ENCODE measurements at regions of chr17 and their contacts with region 1.

Region 1: GRCh38 chr17:81484195-81484979 is 28.2 kb downstream of the ACTG1 start:
- DNase-seq: peak; percentile 83 to 89 (median 89)
- H3K4me3 ChIP-seq: peak overlapping the region in 5 of 7 experiments; percentile 34 to 64 (median 59)
- H3K27ac ChIP-seq: no peak overlapping the region
- H3K4me1 ChIP-seq: peaks cover 4 to 92% (median 73%) of the 10 kb centered on the region in 4 experiments
- H3K27me3 ChIP-seq: no peaks in the 10 kb centered on the region

Region 2: DNA sequence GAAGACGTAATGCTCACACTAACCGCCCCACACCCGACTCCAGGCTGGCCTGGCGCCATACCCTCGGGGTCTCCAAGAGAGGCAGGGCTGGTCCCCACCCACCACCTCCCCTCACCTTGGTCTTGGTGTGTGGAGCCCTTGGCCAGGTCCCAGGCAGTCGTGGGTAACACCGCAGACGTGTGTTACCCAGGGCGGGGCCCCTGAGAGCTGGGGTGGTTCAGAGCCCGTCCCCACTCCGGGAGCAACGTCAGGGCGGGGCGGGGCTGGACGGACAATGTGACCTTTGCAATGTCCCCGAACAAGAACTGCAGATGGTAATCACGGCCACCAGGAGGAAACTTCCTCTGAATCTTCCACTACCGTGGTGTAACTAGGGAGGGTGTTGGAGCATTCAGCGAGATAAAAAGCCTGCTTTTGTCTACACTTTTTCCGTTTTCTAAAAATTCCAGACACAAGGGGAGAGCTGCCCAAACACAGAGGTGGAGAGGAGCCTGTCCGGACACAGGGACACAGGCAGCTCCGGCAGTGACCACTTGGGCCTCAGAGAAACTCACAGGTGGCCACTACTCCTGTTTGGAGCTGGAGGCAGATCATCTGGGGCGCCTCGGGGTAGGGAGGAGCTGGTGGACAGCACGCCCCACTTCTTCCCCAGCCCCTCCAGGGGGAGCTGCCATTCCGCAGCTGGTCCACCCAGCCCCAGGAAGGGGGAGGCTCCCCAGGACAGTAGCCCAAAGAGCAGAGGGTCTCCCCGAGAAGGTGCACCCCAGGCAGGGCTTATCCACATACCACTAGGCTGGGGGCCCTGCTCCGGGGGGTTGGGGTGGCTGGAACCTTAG is 175.1 kb before region 1 on chr17:
- CTCF ChIA-PET with region 1: interaction called, 11 read pairs
- POLR2A ChIA-PET with region 1: no interaction called
- DNase-seq: peak; percentile 70 to 84 (median 78)
- H3K4me3 ChIP-seq: peak overlapping the region in 3 of 7 experiments; percentile 5 to 54 (median 44)
- H3K27ac ChIP-seq: peak overlapping the region in 1 of 2 experiments; percentile 49
- H3K4me1 ChIP-seq: peaks cover 0 to 12% (median 11%) of the 10 kb centered on the region in 4 experiments
- H3K27me3 ChIP-seq: no peaks in the 10 kb centered on the region

Region 3: GRCh38 chr17:81394921-81395599 is 89.3 kb before region 1 on chr17 and contains the start of gene BAHCC1:
- CTCF ChIA-PET with region 1: interaction called, 14 read pairs
- POLR2A ChIA-PET with region 1: interaction called, 3 read pairs
- DNase-seq: peak; percentile 99
- H3K4me3 ChIP-seq: peak within 1 kb of the TSS; percentile 46 to 93 (median 81)
- H3K27ac ChIP-seq: peak within 1 kb of the TSS; percentile 15 to 70
- H3K4me1 ChIP-seq: peaks cover 14 to 66% (median 63%) of the 10 kb centered on the region in 4 experiments
- H3K27me3 ChIP-seq: no peaks in the 10 kb centered on the region

Region 4: DNA sequence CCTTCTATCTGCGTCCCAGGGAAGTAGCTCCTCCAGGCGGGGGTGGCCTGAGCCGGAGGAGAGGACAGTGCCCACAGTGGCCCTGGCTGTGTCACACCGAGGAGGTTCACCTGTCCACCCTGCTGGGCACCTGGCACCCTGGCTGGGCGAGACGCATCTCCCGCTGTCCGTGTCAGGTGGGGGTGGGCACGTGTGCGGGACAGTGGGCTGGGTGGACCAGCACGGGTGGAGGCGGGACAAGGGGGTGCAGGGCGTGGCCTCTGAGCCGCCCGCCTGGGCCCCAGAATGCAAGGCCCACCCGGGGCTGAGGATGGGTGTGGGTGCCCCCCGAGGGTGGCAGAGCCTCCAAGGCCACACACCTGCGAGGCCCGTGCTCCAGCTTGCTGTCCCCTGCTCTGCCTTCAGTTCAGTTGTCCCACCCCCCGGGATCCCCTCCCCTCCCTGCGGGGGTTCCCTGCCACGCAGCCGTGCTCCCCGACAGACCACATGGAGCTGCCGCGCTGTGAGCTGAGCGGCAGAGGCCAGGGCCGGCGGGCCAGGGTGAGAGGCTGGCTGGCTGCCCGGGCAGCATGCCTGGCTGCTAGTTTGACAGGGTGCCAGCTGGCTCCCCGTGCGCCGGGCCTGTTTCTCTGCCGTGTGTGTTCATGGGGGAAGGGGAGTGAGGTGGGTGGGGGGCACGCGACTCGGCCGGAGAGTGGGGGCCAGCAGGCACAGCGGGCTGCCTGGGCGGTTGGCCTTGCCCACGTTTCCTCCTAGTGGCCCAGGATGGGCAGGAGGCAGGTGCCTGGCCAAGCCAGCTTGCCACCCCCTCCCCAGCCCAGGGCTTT is 55.2 kb before region 1 on chr17:
- CTCF ChIA-PET with region 1: interaction called, 29 read pairs
- POLR2A ChIA-PET with region 1: interaction called, 20 read pairs
- DNase-seq: peak; percentile 76 to 89 (median 81)
- H3K4me3 ChIP-seq: peak overlapping the region in 4 of 7 experiments; percentile 28 to 59 (median 52)
- H3K27ac ChIP-seq: peak overlapping the region; percentile 33 to 60
- H3K4me1 ChIP-seq: peaks cover 0 to 71% (median 55%) of the 10 kb centered on the region in 4 experiments
- H3K27me3 ChIP-seq: no peaks in the 10 kb centered on the region

Region 5: GRCh38 chr17:81453712-81454111 is 30.7 kb before region 1 on chr17:
- CTCF ChIA-PET with region 1: interaction called, 12 read pairs
- POLR2A ChIA-PET with region 1: interaction called, 8 read pairs
- DNase-seq: peak; percentile 52 to 83 (median 78)
- H3K4me3 ChIP-seq: peak overlapping the region in 4 of 7 experiments; percentile 39 to 57 (median 49)
- H3K27ac ChIP-seq: peak overlapping the region; percentile 54 to 83
- H3K4me1 ChIP-seq: peaks cover 0 to 74% (median 57%) of the 10 kb centered on the region in 4 experiments
- H3K27me3 ChIP-seq: no peaks in the 10 kb centered on the region

Region 6: DNA sequence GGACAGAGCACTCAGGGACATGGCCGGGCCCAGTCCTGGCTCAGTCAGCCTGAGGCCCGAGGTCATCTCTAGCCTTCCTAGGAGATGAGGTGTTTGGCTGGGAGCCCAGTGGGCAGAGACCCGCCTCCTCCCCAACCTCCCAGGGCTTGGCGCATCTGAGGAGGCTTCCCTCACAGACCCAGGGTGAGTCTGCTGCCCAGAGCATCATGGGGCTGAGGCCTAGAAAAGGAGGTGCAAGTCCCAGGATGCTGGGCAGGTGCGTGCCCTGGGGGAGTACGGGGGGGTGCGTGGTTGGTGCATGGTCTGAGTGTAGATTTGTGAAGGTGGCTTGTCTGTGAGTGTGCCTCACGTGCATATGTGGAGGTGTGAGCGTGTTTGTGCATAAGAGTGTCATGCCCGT is 167.3 kb after region 1 on chr17:
- CTCF ChIA-PET with region 1: no interaction called
- POLR2A ChIA-PET with region 1: no interaction called
- DNase-seq: no peak
- H3K4me3 ChIP-seq: no peak overlapping the region
- H3K27ac ChIP-seq: no peak overlapping the region
- H3K4me1 ChIP-seq: peaks cover 0 to 27% (median 20%) of the 10 kb centered on the region in 4 experiments
- H3K27me3 ChIP-seq: peaks cover 0 to 34% (median 14%) of the 10 kb centered on the region in 5 experiments

Region 7: GRCh38 chr17:81684238-81684887 is 200.0 kb after region 1 on chr17:
- CTCF ChIA-PET with region 1: no interaction called
- POLR2A ChIA-PET with region 1: no interaction called
- DNase-seq: peak; percentile 35 to 47 (median 43)
- H3K4me3 ChIP-seq: peak overlapping the region; percentile 81 to 97 (median 91)
- H3K27ac ChIP-seq: peak overlapping the region; percentile 61 to 89
- H3K4me1 ChIP-seq: peaks cover 9 to 26% (median 22%) of the 10 kb centered on the region in 4 experiments
- H3K27me3 ChIP-seq: no peaks in the 10 kb centered on the region